ENCODE measurements at regions of chr19 and their contacts with region 1.

Region 1: GRCh38 chr19:12965017-12965811 is 4.2 kb upstream of the DAND5 start:
- DNase-seq: peak; percentile 82
- H3K4me3 Mint-ChIP-seq: peak overlapping the region; percentile 75
- H3K27ac Mint-ChIP-seq: peak overlapping the region; percentile 80
- H3K4me1 Mint-ChIP-seq: peaks cover 8% of the 10 kb centered on the region
- H3K27me3 Mint-ChIP-seq: no peaks in the 10 kb centered on the region

Region 2: GRCh38 chr19:12840091-12841079 is 124.8 kb before region 1 on chr19:
- CTCF ChIA-PET with region 1: no interaction called
- POLR2A ChIA-PET with region 1: no interaction called
- DNase-seq: peak; percentile 51
- H3K4me3 Mint-ChIP-seq: peak overlapping the region; percentile 25
- H3K27ac Mint-ChIP-seq: no peak overlapping the region
- H3K4me1 Mint-ChIP-seq: peaks cover 30% of the 10 kb centered on the region
- H3K27me3 Mint-ChIP-seq: peaks cover 65% of the 10 kb centered on the region

Region 3: DNA sequence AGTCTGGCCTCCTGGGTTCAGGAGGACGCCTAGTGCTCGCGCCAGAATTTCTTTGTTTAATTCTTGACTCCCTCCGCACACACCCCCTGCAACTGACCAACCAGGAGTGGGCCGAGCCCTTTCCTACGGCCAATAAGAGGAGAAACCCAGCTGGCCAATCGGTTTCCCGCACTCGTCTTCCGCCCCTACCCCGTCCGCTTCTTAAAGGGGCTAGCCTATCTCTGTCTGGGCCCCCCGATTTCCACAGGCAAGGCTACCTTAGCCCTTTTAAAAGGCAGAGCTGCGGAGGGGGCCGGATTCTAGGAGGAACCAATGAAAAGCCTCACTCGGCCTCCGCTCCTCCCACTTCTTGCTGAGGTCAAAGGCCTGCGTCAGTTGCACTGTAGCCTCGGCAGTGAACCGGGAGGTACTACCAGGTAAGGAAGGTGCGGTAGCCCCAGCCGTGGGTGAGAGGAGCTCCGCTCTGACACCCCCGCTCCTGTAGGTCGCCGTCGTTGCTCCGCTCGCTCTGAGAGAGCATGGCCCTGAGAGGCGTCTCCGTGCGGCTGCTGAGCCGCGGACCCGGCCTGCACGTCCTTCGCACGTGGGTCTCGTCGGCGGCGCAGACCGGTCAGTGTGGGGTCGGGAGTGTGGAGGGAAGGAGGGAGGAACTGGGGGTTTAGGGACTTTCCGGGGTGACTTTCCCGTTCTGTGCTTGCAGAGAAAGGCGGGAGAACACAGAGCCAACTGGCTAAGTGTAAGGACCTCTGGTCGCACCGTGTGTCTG is 74.2 kb before region 1 on chr19 and contains the start of gene GCDH:
- CTCF ChIA-PET with region 1: interaction called, 18 read pairs
- POLR2A ChIA-PET with region 1: no interaction called
- DNase-seq: peak; percentile 99
- H3K4me3 Mint-ChIP-seq: peak within 1 kb of the TSS; percentile 93
- H3K27ac Mint-ChIP-seq: peak within 1 kb of the TSS; percentile 91
- H3K4me1 Mint-ChIP-seq: peaks cover 31% of the 10 kb centered on the region
- H3K27me3 Mint-ChIP-seq: peaks cover 6% of the 10 kb centered on the region
- total RNA-seq, gene GCDH: 35.4 to 41.7 TPM

Region 4: DNA sequence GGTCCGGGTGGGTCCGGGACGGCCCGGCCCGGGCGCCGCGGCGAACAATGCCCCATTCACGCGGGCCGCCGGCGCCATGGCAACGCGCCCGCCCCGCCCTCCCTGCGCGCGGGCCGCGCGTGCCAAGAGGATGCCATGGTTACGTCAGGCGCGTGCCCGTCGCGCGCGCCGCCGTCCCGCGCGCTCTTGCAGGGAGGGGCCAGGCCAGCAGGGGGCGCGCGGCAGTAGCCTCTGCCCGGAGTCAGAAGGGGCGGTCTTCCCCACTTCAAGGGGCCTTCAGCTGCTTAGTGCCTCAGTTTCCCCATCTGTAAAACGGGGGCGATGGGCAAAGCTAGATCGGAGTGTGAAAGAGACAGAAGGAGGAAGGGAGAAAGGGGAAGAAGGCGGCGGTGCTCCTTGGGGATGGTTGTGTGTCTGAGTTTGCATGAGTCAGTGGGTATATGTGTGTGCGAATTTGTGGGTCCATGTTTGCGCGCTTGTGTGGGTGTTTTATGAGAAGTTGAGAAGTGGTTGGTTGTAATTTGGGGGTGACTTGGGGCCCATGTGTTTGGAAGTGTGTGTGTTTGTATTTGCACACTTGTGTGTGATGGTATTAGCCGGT is 18.4 kb after region 1 on chr19:
- CTCF ChIA-PET with region 1: interaction called, 98 read pairs
- POLR2A ChIA-PET with region 1: no interaction called
- DNase-seq: peak; percentile 73
- H3K4me3 Mint-ChIP-seq: no peak overlapping the region
- H3K27ac Mint-ChIP-seq: no peak overlapping the region
- H3K4me1 Mint-ChIP-seq: no peaks in the 10 kb centered on the region
- H3K27me3 Mint-ChIP-seq: no peaks in the 10 kb centered on the region

Region 5: GRCh38 chr19:13069415-13070359 is 104.5 kb after region 1 on chr19:
- CTCF ChIA-PET with region 1: interaction called, 10 read pairs
- POLR2A ChIA-PET with region 1: no interaction called
- DNase-seq: no peak
- H3K4me3 Mint-ChIP-seq: no peak overlapping the region
- H3K27ac Mint-ChIP-seq: peak overlapping the region; percentile 38
- H3K4me1 Mint-ChIP-seq: no peaks in the 10 kb centered on the region
- H3K27me3 Mint-ChIP-seq: no peaks in the 10 kb centered on the region

Region 6: DNA sequence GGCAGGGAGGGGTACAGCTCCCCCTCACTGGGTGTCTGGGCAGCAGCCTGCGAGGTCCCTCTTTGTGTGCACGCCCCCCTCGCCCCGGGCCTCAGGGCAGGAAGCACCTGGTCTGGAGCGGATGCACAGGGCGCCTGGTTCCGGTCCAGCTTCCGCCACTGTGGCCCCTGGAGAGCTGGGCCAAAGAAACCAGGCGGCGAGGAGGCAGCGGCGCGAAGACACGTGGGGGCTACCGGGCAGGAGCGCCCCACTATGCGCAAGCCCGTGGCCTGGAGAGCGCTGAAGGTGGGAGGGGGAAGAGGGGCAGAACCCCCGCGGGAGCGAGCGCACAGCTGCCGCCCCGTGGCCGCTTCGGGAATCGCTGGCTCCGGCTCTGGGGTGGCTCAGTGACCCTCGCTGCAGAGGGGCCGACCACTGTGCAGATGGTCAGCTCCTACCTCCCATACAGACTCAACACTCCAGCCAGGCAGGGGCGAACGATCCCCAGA is 139.2 kb after region 1 on chr19:
- CTCF ChIA-PET with region 1: interaction called, 18 read pairs
- POLR2A ChIA-PET with region 1: interaction called, 4 read pairs
- DNase-seq: peak; percentile 62
- H3K4me3 Mint-ChIP-seq: peak overlapping the region; percentile 82
- H3K27ac Mint-ChIP-seq: peak overlapping the region; percentile 92
- H3K4me1 Mint-ChIP-seq: peaks cover 38% of the 10 kb centered on the region
- H3K27me3 Mint-ChIP-seq: peaks cover 6% of the 10 kb centered on the region